CD4-positive, alpha-beta memory T cell (primary cell): ENCODE measurements at regions of chr14 and their contacts with region 1.

Region 1: GRCh38 chr14:80987235-80988032 is 32.0 kb downstream of the TSHR start:
- DNase-seq: peak; percentile 62 to 71 (median 68)
- H3K4me3 ChIP-seq: no peak overlapping the region
- H3K4me3 Mint-ChIP-seq: no peak overlapping the region
- H3K27ac ChIP-seq: no peak overlapping the region
- H3K27ac Mint-ChIP-seq: no peak overlapping the region
- H3K4me1 ChIP-seq: no peaks in the 10 kb centered on the region
- H3K4me1 Mint-ChIP-seq: no peaks in the 10 kb centered on the region
- H3K27me3 ChIP-seq: no peaks in the 10 kb centered on the region
- H3K27me3 Mint-ChIP-seq: peaks cover 2 to 9% of the 10 kb centered on the region in 2 donors

Region 2: DNA sequence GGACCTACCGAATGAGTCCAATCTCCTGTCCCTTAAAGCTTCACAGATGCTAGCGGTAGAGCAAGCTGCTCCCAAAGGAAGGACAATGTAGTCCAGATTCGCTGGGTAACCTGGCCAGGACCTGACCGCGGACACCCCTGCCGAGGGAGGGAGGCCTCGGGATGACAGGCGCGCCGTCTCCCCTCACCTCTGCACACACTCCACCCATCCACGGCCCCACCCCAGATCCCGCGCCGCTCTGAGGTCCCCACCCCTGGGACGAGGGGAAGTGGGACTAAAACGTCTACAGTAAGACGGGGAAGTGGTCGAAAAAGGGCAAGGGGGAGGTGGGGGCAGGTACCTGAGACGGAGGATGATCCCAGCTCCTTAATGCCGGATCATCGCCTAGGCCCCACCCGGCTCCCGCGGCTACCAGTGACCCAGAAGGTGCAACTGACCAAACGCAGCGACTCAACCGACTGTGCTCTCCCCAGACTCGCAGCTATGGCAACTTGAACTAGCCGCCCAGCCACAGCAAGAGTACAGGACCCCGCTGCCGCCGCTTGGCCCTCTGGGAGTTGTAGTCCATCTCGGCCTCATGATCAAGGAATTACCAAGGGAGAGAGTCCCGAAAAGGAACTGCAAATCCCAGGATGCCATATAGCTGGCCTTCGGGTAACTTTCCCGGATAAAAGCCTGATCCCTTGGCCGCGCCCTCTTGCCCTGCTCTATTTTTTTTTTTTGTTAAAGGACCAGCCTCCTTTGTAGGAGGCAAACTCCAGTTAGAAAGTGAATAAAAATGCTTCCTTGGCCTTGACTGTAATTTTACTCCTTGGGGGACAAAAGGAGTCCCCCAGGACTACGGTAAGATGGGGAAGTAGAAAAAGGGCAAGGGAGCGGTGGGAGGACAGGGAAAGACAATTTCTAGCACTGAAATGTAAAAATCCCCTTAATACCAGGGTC is 45.9 kb before region 1 on chr14 and contains the start of gene CEP128:
- CTCF ChIA-PET with region 1: interaction called, 12 read pairs
- POLR2A ChIA-PET with region 1: no interaction called
- intact Hi-C with region 1: no loop called
- DNase-seq: peak; percentile 77 to 84 (median 82)
- H3K4me3 ChIP-seq: peak within 1 kb of the TSS; percentile 64 to 75
- H3K4me3 Mint-ChIP-seq: peak within 1 kb of the TSS; percentile 89 to 95 (median 92)
- H3K27ac ChIP-seq: peak within 1 kb of the TSS; percentile 80
- H3K27ac Mint-ChIP-seq: peak within 1 kb of the TSS; percentile 82 to 96 (median 93)
- H3K4me1 ChIP-seq: peaks cover 30% of the 10 kb centered on the region
- H3K4me1 Mint-ChIP-seq: peaks cover 19 to 34% (median 25%) of the 10 kb centered on the region in 4 donors
- H3K27me3 ChIP-seq: no peaks in the 10 kb centered on the region
- H3K27me3 Mint-ChIP-seq: no peaks in the 10 kb centered on the region
- total RNA-seq, gene CEP128: 20.1 to 21.6 TPM

Region 3: DNA sequence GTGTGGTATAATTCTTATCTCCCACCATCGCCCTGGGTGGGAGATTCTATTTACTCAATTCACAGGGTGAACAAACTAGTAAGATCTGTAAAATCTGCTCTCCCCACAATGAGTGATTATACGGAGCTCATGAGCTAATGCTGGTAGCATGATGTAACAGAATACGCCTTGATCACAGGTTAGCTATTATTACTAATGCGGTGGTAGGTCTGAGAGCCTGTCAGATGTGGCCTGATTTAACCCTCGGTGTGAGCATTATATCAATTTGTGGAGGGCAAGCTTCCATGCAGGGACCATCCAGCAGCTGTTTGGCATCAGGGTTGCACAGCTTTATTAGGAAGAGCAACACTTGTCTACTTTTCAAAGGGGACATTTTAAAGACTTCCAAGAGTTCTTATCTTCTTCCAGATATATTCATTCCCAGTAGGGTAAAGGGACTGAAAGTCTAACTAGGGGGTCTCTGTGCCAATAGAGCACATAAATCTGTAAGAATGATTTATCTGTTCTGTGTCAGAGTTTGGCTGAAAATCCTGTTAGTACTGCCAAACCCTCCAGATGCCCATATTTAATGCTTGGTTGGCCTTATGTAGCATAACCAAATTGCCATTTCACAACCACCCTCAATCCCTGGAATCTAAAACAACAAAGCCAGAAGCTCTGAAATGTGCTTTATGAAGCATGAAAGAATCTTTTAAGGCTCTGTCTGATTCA is 13.3 kb before region 1 on chr14:
- CTCF ChIA-PET with region 1: interaction called, 73 read pairs
- POLR2A ChIA-PET with region 1: no interaction called
- intact Hi-C with region 1: no loop called
- DNase-seq: peak in 4 of 5 donors; percentile 17 to 58 (median 34)
- H3K4me3 ChIP-seq: no peak overlapping the region
- H3K4me3 Mint-ChIP-seq: peak overlapping the region in 2 of 8 donors; percentile 47 to 58
- H3K27ac ChIP-seq: no peak overlapping the region
- H3K27ac Mint-ChIP-seq: peak overlapping the region in 3 of 7 donors; percentile 14 to 84 (median 63)
- H3K4me1 ChIP-seq: peaks cover 21% of the 10 kb centered on the region
- H3K4me1 Mint-ChIP-seq: peaks cover 14 to 29% (median 22%) of the 10 kb centered on the region in 4 donors
- H3K27me3 ChIP-seq: no peaks in the 10 kb centered on the region
- H3K27me3 Mint-ChIP-seq: no peaks in the 10 kb centered on the region